Activated B cell treated with CpG ODN at 0.5 μM for 24 hours (primary cell): ENCODE measurements at regions of chr13 and their contacts with region 1.

Region 1: DNA sequence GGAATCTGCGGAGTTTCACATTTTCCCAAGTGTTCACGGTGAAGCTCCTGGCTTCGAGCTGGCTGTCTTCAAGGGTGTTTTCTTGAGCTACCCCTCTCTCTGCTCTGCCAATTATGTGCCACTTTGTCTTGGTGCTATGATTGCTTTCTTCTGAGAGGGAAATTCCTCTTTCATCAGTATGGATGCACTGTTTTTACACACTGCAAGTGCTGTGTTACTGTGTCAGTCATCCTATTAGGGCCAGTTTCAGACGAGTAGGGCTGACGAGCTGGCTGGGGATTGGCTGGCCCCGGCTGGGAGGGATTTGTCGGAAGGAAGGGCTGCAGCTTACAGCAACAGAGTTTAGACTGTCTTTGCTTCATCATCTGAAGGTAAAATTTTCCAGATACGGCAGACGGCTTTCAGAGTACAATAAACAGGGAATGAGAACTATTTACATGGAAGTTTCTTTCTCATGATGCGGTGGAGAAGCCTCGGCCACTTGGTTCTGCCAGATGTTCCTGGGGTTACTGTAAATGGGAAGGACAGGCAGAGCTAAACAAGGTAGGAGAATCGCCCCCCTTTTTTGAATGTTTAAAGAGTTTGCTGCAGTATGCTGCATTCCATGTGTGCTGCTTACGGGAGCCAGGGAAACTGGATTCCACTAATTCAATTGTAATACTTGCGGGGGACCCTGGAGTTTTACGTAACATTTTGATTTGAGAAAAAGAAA is at the start of gene MBNL2:
- DNase-seq: peak; percentile 67
- ATAC-seq: peak; percentile 98
- H3K4me3 Mint-ChIP-seq: peak within 1 kb of the TSS; percentile 89
- H3K27ac Mint-ChIP-seq: peak within 1 kb of the TSS; percentile 92
- H3K4me1 Mint-ChIP-seq: peaks cover 51% of the 10 kb centered on the region
- H3K27me3 Mint-ChIP-seq: no peaks in the 10 kb centered on the region
- CTCF ChIP-seq: no peak
- total RNA-seq, gene MBNL2: 15.3 and 18.8 TPM in 2 replicates

Region 2: DNA sequence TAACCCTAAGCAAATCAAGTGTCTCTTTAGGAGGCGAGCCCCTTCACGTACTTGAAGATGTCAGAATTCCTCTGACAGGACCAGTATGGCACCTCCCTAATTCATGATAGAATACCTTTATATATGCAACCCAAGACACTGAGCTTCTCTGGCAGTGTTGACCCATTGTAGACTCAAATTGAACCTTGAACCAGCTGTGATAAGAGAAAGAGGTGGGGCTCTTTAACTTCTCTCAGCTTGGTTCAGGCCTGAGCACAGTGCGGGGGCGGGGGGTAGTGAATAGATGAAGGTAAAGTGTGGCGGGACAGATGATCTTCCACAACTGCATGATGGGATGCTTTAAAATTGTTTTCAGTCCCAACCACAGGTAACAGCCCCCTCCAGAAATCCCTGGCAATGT is 12.1 kb after region 1 on chr13:
- CTCF ChIA-PET with region 1: no interaction called
- POLR2A ChIA-PET with region 1: interaction called, 11 read pairs
- intact Hi-C with region 1: no loop called
- DNase-seq: no peak
- ATAC-seq: no peak
- H3K4me3 Mint-ChIP-seq: no peak overlapping the region
- H3K27ac Mint-ChIP-seq: no peak overlapping the region
- H3K4me1 Mint-ChIP-seq: peaks cover 42% of the 10 kb centered on the region
- H3K27me3 Mint-ChIP-seq: no peaks in the 10 kb centered on the region
- CTCF ChIP-seq: no peak

Region 3: GRCh38 chr13:97261254-97262005 is 39.3 kb after region 1 on chr13:
- CTCF ChIA-PET with region 1: no interaction called
- POLR2A ChIA-PET with region 1: no interaction called
- intact Hi-C with region 1: loop called (anchors 2 kb)
- DNase-seq: no peak
- ATAC-seq: peak; percentile 58
- H3K4me3 Mint-ChIP-seq: no peak overlapping the region
- H3K27ac Mint-ChIP-seq: peak overlapping the region; percentile 36
- H3K4me1 Mint-ChIP-seq: peaks cover 67% of the 10 kb centered on the region
- H3K27me3 Mint-ChIP-seq: no peaks in the 10 kb centered on the region
- CTCF ChIP-seq: no peak

Region 4: DNA sequence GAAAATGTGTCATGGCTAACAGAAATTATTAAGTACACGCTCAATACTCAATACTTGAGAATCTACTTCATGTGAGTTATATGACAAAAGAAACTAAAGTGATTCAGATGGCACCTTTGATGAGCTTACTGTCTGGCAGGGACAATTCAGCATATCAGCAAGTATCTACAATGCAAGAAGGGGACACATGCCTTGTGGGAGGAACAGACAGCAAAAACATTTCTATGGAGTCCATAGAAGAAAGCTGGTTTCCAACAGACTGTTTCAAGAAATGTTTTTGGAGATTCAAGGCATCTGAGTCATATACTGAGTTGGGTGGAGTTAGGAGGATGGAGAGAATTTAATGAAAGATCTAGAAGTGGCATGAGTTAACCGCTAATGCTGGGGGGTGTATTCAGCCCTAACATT is 54.7 kb after region 1 on chr13:
- CTCF ChIA-PET with region 1: no interaction called
- POLR2A ChIA-PET with region 1: no interaction called
- intact Hi-C with region 1: loop called (anchors 2 kb)
- DNase-seq: no peak
- ATAC-seq: no peak
- H3K4me3 Mint-ChIP-seq: peak overlapping the region; percentile 21
- H3K27ac Mint-ChIP-seq: no peak overlapping the region
- H3K4me1 Mint-ChIP-seq: peaks cover 71% of the 10 kb centered on the region
- H3K27me3 Mint-ChIP-seq: no peaks in the 10 kb centered on the region
- CTCF ChIP-seq: no peak

Region 5: DNA sequence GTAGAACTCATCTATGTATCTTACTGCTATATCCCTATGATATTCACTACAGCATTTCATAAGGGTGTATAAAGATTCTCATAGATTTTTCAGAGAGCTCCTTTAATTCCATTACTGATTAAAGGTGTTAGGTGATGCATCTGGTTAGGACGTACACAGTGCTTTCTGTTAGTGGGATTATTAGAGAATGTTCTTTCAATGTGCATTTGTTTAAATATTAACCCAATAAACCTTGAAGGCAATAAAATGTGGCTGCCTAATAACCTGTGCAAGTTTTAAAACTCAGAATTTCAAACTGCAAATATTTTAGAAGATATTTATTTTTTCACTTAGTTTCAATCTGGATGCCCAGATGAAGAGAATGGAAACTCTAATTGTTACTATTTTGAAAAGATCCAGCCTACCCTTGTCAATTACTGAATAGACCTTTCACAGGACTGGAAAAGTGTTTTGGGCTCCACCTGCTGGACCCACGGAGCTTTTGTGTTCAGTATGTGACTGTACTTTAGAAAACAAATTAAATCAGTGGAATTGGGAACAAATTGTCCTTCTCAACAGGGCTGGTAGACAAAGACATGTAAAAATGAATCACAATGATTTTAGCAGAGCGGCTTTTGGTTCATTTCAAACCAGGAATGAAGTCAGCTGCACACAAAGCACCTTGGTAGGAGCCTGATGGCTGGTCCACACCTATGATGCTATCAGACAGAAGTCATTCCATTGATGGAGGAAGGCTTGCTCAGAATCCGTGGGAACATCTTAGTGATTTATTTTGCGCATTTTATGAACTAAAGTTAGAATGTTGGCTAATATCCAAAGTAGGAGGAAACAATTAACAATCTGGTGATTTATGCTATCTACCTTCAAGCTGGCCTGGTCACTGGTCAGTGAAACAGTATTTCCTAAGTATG is 122.4 kb after region 1 on chr13:
- CTCF ChIA-PET with region 1: no interaction called
- POLR2A ChIA-PET with region 1: no interaction called
- intact Hi-C with region 1: loop called (anchors 5 kb)
- DNase-seq: no peak
- ATAC-seq: no peak
- H3K4me3 Mint-ChIP-seq: no peak overlapping the region
- H3K27ac Mint-ChIP-seq: no peak overlapping the region
- H3K4me1 Mint-ChIP-seq: no peaks in the 10 kb centered on the region
- H3K27me3 Mint-ChIP-seq: no peaks in the 10 kb centered on the region
- CTCF ChIP-seq: no peak

Region 6: DNA sequence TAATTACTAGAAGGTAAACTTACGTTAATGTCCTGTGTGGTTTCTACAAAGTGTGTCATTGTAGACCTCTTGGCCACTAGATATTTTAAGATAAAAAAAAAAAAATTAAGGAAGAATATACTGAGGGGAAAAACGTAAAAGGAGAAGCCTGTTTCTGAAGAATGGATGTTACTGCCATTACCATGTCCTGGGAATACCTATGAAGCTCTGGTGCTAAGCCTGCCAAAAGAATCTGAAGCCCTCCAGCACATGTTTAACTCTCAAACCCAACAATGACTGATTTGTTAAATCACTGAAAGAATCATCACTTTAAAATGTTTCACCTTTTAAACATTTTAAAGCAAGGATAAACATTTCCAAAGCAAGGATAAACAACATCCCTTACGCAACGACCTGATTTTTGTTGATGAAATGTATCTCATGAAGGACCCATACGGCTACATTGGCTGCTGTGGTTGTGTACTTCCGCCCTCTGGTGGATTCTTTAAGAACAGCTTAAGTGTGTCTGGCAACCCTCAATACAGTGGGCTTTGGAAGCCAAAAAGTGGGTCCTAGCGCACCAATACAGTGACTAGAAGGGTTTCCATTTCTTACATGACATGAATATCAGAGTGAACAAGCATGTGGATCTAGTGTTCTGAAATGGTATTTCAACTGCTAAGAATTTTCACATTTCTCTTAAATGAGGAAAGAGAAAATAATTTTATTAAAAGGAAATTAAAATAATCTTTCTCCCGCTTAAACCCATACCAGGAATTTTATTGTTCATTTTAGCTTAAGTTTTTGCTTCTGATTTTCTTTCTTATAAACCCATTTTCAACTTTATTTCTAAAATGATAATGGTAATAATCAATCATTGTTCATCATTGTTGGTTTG is 137.3 kb after region 1 on chr13:
- CTCF ChIA-PET with region 1: no interaction called
- POLR2A ChIA-PET with region 1: no interaction called
- intact Hi-C with region 1: loop called (anchors 5 kb)
- DNase-seq: no peak
- ATAC-seq: peak; percentile 94
- H3K4me3 Mint-ChIP-seq: no peak overlapping the region
- H3K27ac Mint-ChIP-seq: no peak overlapping the region
- H3K4me1 Mint-ChIP-seq: no peaks in the 10 kb centered on the region
- H3K27me3 Mint-ChIP-seq: no peaks in the 10 kb centered on the region
- CTCF ChIP-seq: peak; percentile 33